AG04449 (cell line): ENCODE measurements at regions of chr7 and their contacts with region 1.

Region 1: GRCh38 chr7:149005241-149006050 is 22.9 kb downstream of the PDIA4 start:
- DNase-seq: no peak
- H3K4me3 ChIP-seq: no peak overlapping the region
- CTCF ChIP-seq: peak; percentile 81

Region 2: DNA sequence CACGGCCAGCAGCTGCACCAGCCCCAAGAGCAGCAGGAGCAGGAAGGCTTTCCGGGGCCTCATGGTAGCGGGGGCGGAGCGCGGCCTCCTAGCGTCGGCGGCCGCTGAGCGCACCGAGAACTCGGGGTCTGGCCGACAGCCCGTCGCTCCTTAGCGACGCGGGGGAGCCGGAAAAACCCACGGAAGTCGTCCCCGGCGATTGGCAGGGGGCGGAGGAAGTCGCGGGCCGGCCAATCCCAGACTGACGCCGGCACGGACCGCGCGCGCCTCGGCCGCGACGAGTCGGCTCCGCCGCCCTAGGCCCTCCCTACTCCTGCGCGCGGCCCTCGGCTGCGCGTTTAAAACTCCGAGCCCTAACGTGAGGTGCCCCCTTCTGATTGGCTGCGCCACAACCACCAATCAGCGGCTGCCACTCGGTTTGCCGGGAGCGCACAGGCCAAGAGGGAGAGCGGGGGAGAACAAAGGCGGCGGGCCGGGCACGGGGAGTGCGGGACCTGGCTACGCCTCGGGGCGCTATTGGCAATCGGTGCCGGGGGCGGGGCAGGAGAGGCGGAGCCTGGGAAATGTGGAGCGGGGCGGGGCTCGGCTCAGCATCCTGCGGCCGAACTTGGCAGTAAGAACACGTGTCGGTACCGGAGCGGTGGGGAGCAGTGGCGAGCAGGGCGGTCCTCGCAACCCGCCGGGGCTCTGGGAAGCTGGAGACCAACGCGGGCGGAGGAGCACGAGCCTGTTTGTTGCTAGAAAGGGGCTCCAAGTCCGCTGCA is 23.1 kb after region 1 on chr7 and contains the start of gene PDIA4:
- CTCF ChIA-PET with region 1: interaction called, 126 read pairs
- POLR2A ChIA-PET with region 1: no interaction called
- DNase-seq: peak; percentile 92
- H3K4me3 ChIP-seq: peak within 1 kb of the TSS; percentile 81
- CTCF ChIP-seq: peak; percentile 43

Region 3: DNA sequence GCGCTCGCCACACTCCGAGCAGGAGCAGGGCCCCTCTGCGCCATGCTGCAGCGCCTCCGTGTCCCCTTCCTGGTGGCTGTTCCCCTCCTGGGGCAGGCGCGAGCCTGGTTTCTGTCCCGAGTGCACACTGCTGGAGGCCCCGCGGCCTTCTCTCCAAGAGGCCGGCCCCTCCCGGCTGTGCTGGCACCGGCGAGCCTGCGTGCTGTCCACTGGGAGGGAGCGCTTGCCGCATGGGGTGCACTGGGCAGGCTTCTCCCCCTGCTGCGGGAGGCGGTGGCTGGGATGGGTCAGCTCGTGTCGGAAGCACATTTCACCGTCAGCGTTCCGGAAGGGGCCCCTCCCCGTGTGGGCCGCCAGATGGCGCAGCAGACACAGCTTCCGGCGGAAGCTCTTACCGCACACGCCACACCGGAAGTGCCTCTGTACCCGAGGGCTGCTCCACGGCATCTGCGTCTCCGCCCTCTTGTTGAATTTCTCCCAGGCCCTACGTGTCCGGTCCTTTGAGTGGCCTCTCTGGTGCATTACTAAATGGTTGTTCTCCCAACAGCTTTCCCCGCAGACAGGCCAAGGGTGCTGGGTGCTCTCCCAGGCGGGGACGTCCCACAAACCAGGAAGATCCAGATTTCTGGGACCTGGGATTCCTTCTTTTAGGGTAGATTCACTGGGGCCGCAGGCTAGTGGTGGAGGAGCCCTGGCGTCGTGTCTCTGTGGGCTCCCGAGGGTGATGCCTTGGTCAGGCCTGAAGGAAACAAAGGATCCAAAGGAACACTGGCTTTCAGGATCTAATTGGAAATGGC is 66.4 kb after region 1 on chr7:
- CTCF ChIA-PET with region 1: interaction called, 94 read pairs
- POLR2A ChIA-PET with region 1: no interaction called
- DNase-seq: no peak
- H3K4me3 ChIP-seq: no peak overlapping the region
- CTCF ChIP-seq: peak; percentile 21

Region 4: GRCh38 chr7:149097088-149097487 is 91.6 kb after region 1 on chr7:
- CTCF ChIA-PET with region 1: interaction called, 11 read pairs
- POLR2A ChIA-PET with region 1: no interaction called
- DNase-seq: no peak
- H3K4me3 ChIP-seq: no peak overlapping the region
- CTCF ChIP-seq: no peak